GM10248 (cell line): ENCODE measurements at regions of chr1 and their contacts with region 1.

Region 1: DNA sequence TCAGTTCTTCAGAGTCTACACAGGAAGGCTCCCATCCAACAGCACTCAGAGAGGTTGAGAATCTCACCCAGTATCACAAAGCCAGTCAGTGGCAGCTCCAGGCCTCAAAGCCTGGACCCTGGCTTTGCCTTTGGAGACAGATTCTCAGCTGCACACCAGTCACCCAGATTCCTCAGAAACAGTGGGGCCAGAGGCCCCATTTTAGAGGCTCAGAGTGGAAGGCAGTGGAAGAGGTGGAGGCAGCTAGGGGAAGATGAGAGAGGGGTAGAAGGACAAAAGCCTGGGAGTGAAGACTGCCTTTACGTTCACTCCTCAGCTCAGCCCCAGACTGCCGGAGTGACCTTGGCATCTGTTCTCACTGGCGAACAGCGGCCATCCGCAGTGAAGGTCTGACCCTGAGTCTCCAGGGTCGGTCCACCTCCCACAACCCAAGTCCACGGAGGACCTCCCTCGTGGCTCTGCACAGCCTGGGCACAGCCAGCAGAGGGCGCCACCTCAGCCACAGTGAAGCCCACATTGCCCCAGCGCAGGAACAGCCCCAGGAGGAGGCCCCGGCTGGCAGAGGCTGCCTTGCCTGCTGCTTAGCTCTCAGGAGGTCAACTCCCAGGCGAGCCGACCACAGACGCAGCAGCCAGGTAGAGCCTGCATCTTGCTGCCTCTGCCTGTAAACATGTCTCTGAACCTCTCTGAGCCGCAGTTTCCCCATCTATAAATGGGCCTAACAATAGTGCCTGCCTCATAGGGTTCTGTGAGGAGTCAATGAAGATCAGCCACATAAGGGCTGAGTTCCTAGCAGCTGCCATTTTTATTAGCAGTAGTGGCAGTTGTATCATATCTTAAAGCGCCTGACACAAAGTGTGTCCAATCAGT is 5.9 kb upstream of the FNDC5 start:
- DNase-seq: peak; percentile 80
- CTCF ChIP-seq: peak; percentile 89

Region 2: DNA sequence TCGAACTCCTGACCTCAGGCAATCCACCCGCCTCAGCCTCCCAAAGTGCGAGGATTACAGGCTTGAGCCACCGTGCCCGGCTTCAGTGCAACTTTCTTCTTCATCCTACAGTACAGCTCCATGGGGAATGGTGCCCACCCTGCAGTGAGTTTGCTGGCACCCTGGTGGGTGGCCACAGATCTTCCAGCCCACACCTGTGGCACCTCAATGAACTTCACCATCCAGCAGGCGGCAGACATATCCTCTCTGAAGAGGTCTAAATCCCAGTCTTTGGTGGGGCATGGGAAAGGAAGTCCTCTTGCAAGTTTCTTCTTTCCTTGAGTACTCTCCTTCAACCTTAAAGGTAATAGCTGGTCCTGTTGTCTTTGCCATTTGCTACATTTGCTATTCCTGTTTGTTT is 355.4 kb before region 1 on chr1:
- CTCF ChIA-PET with region 1: interaction called, 18 read pairs
- POLR2A ChIA-PET with region 1: no interaction called
- DNase-seq: no peak
- CTCF ChIP-seq: no peak

Region 3: GRCh38 chr1:32861904-32862695 is 14.5 kb before region 1 on chr1:
- CTCF ChIA-PET with region 1: interaction called, 35 read pairs
- POLR2A ChIA-PET with region 1: no interaction called
- DNase-seq: no peak
- CTCF ChIP-seq: no peak

Region 4: DNA sequence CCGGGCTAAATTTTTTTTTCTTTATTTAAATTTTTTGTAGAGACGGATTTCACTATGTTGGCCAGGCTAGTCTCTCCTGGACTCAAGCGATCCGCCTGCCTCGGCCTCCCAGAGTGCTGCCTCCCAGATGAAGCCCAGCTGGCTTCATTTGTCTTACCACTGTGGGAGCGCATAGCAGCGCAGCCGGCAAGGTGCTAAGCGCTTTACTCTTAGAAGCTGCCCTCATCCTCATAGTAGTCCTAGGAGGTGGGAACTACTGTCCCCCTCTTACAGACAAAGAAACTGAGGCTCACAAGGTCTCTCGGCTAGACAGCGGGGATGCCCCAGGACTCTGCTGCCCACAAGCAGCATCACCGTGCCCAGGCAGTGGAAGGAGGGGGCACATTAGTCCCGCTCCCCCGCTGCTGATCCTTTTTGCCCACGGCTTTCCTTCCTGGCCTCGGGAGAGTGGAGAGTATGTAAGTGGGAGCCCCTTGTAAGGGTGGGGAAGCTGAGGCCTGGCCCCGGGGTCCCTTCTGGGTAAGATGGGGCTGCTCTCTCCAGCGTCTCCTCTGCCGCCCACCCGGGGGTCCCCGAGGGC is 23.9 kb after region 1 on chr1:
- CTCF ChIA-PET with region 1: interaction called, 20 read pairs
- POLR2A ChIA-PET with region 1: no interaction called
- DNase-seq: no peak
- CTCF ChIP-seq: no peak

Region 5: DNA sequence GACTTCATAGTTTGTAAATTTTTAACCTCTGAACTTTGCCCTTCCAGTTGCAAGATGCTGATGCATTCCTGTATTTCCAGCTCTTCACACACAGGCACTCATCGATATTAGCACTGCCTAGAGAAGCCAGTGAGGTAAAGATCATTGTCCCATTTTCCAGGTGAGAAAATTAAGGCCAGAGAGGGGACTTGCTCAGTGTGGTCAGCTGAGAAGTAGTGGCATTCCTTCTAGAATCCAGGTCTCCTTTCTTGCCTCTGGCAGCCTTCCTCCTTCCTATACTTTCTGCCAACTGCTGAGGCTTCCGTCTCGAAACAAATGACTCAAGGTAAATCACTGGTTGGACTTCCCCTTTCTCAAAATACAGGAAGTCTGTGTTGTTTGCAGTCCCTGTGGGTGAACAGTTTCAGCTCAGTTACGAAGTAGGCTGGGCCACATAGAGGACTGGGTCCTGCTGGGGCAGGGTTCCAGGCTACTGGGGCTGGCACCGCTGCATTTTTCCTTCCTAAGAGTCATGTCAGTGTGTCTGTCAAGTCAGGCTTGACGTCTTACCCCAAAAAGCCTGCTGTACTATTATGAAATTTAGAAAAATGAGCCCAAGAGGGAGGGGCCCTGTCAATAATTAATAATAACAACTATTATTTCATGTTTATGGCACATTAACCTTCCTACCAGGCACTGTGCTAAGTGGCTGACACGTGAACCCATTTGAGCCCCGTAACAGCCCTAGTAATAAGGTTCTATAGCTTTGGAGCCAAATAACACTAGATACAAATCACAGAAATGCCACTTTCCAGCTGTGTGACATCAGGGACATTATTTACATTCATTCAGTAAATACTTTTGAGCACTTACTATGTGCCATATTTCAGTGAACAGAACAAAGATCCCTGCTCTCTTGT is 104.7 kb after region 1 on chr1:
- CTCF ChIA-PET with region 1: no interaction called
- POLR2A ChIA-PET with region 1: no interaction called
- DNase-seq: peak; percentile 85
- CTCF ChIP-seq: no peak

Region 6: DNA sequence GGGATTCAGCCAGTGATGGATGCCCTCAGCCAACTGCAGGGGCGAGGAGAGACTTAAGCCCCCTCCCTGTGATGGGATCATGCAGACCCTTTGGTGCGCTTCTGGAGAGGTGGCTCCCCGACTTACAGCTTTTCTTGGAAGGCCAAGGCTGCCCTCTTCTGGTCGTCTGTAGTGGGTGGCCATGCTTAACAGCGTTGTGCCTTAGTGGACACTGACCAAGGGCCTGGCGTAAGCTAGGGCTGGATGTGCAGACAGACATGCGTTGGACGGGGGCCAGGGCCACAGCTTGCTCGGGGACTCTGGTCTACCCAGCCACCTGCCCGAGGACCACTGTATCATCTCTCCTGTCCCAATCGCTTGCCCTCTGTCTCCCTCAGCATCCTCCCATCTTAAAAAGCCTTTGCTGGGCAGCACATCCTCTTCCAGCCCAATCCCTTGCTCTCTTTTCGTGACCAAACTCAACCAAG is 209.8 kb after region 1 on chr1:
- CTCF ChIA-PET with region 1: interaction called, 55 read pairs
- POLR2A ChIA-PET with region 1: no interaction called
- DNase-seq: peak; percentile 62
- CTCF ChIP-seq: peak; percentile 81